ENCODE measurements at regions of chr1 and their contacts with region 1.

Region 1: GRCh38 chr1:214213136-214213535 is 67.8 kb upstream of the SMYD2 start:
- DNase-seq: no peak
- H3K4me3 ChIP-seq: no peak overlapping the region
- H3K27ac ChIP-seq: no peak overlapping the region
- H3K4me1 ChIP-seq: peaks cover 7% of the 10 kb centered on the region
- H3K27me3 ChIP-seq: peaks cover 6 to 16% of the 10 kb centered on the region in 2 experiments
- CTCF ChIP-seq: no peak
- POLR2A ChIP-seq: no peak

Region 2: GRCh38 chr1:213122514-213122929 is 1090.6 kb before region 1 on chr1:
- CTCF ChIA-PET with region 1: interaction called, 4 read pairs
- POLR2A ChIA-PET with region 1: no interaction called
- dilution Hi-C with region 1: no loop called
- intact Hi-C with region 1: loop called (anchors 5 kb)
- DNase-seq: peak; percentile 66
- H3K4me3 ChIP-seq: no peak overlapping the region
- H3K27ac ChIP-seq: no peak overlapping the region
- H3K4me1 ChIP-seq: peaks cover 39% of the 10 kb centered on the region
- H3K27me3 ChIP-seq: no peaks in the 10 kb centered on the region
- CTCF ChIP-seq: peak; percentile 18 to 21
- POLR2A ChIP-seq: no peak

Region 3: DNA sequence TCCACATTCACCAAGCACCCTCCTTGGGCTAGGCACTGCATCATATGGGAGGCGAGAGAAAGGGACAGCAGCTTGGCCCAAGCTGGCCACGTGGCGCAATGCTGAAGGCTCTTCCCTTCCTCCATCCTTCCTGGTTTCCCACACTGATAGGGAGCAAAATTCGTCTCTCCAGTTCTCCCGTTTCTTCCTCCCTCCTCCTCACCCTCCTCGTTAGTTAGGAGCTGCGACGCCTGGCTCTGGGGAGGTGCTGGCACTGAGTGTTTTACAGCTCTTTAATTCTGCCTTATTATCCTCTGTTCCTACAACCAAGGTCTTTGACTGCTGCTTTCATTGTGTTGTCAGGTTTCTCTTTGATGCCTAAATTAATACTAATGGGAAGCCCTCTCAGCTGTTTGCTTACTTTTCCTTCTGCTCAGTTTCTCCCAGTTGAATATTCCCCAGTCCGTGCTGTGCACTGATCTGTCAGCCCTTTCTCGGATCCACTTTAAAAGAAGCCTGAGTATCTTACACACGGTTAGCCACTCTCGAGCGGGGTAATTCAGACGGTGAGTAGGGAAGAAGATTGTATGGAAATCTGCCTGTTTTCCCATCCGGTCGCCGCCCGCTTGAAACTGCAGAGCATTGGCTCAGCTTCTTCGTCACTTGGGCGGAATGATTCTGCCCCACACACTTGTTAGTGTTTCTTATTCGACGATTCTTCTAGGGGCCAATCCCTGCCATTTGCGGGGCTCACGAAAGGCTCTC is 11.6 kb after region 1 on chr1:
- CTCF ChIA-PET with region 1: interaction called, 25 read pairs
- POLR2A ChIA-PET with region 1: no interaction called
- dilution Hi-C with region 1: no loop called
- intact Hi-C with region 1: no loop called
- DNase-seq: peak; percentile 31
- H3K4me3 ChIP-seq: peak overlapping the region; percentile 25 to 73 (median 48)
- H3K27ac ChIP-seq: no peak overlapping the region
- H3K4me1 ChIP-seq: peaks cover 7% of the 10 kb centered on the region
- H3K27me3 ChIP-seq: peaks cover 2 to 6% of the 10 kb centered on the region in 2 experiments
- CTCF ChIP-seq: no peak
- POLR2A ChIP-seq: no peak

Region 4: GRCh38 chr1:214251354-214251753 is 38.2 kb after region 1 on chr1:
- CTCF ChIA-PET with region 1: interaction called, 17 read pairs
- POLR2A ChIA-PET with region 1: no interaction called
- dilution Hi-C with region 1: no loop called
- intact Hi-C with region 1: no loop called
- DNase-seq: no peak
- H3K4me3 ChIP-seq: no peak overlapping the region
- H3K27ac ChIP-seq: no peak overlapping the region
- H3K4me1 ChIP-seq: peaks cover 3% of the 10 kb centered on the region
- H3K27me3 ChIP-seq: no peaks in the 10 kb centered on the region
- CTCF ChIP-seq: no peak
- POLR2A ChIP-seq: no peak

Region 5: GRCh38 chr1:214316593-214316992 is 103.5 kb after region 1 on chr1:
- CTCF ChIA-PET with region 1: interaction called, 18 read pairs
- POLR2A ChIA-PET with region 1: no interaction called
- dilution Hi-C with region 1: no loop called
- intact Hi-C with region 1: no loop called
- DNase-seq: no peak
- H3K4me3 ChIP-seq: no peak overlapping the region
- H3K27ac ChIP-seq: no peak overlapping the region
- H3K4me1 ChIP-seq: no peaks in the 10 kb centered on the region
- H3K27me3 ChIP-seq: no peaks in the 10 kb centered on the region
- CTCF ChIP-seq: no peak
- POLR2A ChIP-seq: no peak

Region 6: DNA sequence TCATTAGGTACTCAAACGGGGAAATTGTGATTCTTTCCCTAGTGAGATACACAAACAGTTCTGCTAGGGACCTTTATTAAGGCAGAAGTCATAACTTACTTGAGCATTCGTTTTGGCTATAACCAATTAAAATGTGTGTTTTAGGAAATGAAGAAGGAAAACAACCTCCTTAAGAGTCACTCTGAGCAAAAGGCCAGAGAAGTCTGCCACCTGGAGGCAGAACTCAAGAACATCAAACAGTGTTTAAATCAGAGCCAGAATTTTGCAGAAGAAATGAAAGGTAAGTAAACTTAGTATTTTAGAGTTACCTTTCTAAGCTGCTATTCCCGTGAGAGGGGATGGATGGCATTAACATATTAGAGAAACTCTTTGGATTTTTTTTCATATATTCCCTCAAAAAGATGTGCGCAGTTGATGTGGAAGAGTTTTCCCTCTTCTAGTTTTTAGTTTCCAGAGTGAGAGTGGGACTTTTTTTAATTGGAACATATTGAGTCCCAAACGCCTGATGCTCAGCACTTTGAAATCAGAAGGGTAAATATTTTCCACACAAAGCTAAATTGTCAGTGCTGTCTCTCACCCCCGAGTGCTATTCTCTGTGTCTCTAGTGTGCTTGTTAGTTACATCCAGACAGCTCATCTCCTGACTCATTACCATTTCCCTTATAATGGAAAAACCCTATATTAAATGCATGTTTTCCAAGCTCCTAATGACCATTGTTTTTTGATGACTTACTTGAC is 424.8 kb after region 1 on chr1:
- CTCF ChIA-PET with region 1: interaction called, 5 read pairs
- POLR2A ChIA-PET with region 1: no interaction called
- dilution Hi-C with region 1: no loop called
- intact Hi-C with region 1: loop called (anchors 1 kb)
- DNase-seq: peak; percentile 64
- H3K4me3 ChIP-seq: no peak overlapping the region
- H3K27ac ChIP-seq: no peak overlapping the region
- H3K4me1 ChIP-seq: peaks cover 7% of the 10 kb centered on the region
- H3K27me3 ChIP-seq: no peaks in the 10 kb centered on the region
- CTCF ChIP-seq: peak; percentile 52 to 68
- POLR2A ChIP-seq: no peak

Region 7: GRCh38 chr1:215226757-215227156 is 1013.6 kb after region 1 on chr1:
- CTCF ChIA-PET with region 1: no interaction called
- POLR2A ChIA-PET with region 1: no interaction called
- dilution Hi-C with region 1: no loop called
- intact Hi-C with region 1: no loop called
- DNase-seq: no peak
- H3K4me3 ChIP-seq: no peak overlapping the region
- H3K27ac ChIP-seq: no peak overlapping the region
- H3K4me1 ChIP-seq: no peaks in the 10 kb centered on the region
- H3K27me3 ChIP-seq: no peaks in the 10 kb centered on the region
- CTCF ChIP-seq: no peak
- POLR2A ChIP-seq: no peak